A673 (cell line): ENCODE measurements at regions of chr19 and their contacts with region 1.

Region 1: GRCh38 chr19:5753743-5754142 is 30.8 kb downstream of the PRR22 start:
- DNase-seq: no peak
- H3K4me3 ChIP-seq: no peak overlapping the region
- H3K27ac ChIP-seq: no peak overlapping the region
- H3K4me1 ChIP-seq: no peaks in the 10 kb centered on the region
- H3K27me3 ChIP-seq: no peaks in the 10 kb centered on the region
- CTCF ChIP-seq: no peak

Region 2: DNA sequence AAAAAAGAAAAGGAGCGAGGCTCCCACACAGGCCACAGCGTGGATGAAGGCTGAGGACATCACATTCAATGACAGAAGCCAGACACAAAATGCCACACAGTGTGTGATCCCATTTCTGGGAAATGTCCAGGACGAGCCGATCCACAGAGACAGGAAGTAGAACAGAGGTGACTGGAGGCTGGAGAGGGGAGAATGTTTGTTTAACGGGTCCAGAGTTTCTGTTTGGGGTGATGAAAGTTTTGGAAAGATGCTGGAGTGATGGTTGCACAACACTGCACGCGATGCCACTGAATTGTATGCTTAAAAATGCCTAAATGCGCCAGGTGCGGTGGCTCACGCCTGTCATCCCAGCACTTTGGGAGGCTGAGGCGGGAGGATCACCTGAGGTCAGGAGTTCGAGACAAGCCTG is 117.2 kb after region 1 on chr19:
- CTCF ChIA-PET with region 1: interaction called, 13 read pairs
- POLR2A ChIA-PET with region 1: no interaction called
- intact Hi-C with region 1: no loop called
- DNase-seq: no peak
- H3K4me3 ChIP-seq: no peak overlapping the region
- H3K27ac ChIP-seq: no peak overlapping the region
- H3K4me1 ChIP-seq: no peaks in the 10 kb centered on the region
- H3K27me3 ChIP-seq: no peaks in the 10 kb centered on the region
- CTCF ChIP-seq: no peak